ENCODE measurements at regions of chr15 and their contacts with region 1.

Region 1: DNA sequence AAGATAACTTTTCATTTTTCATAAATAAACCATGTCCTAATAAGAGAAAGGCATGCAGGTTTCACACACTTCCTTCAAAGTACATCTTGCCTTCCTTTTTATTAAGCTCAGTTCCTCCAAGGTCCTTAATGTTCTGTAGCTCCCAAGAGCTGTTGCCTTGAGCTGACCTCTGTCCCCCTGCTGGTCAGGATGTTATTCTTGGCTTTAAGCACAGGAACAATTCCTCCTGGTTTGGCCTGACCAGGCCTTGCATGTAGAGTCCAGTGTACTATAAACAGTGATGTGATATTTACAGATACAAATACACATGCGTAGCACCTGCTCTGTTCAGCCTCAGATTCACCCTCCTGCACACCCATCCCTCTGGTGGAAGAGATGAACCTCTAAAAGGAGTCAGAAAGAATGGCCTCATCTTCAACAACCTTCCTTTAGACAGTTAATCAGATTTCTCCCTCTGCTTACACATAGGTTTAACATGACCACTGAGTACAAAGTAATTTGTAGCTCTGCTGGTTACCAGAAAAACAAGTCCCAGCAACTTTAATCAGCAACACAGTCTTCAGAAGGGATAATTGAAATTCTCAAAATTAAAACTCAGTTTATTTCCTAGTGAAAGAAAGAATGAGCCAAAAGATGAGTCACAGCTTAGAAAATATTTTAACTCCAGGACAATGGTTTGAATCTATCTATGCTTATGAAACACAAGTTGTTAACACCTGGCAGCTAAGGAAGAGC is 46.5 kb downstream of the PTPN9 start:
- DNase-seq: no peak
- ATAC-seq: peak; percentile 31
- H3K4me3 ChIP-seq: no peak overlapping the region
- H3K4me3 Mint-ChIP-seq: no peak overlapping the region
- H3K27ac ChIP-seq: no peak overlapping the region
- H3K27ac Mint-ChIP-seq: peak overlapping the region in 5 of 9 donors; percentile 5 to 80 (median 20)
- H3K4me1 ChIP-seq: no peaks in the 10 kb centered on the region
- H3K4me1 Mint-ChIP-seq: peaks cover 8 to 34% (median 19%) of the 10 kb centered on the region in 7 donors
- H3K27me3 ChIP-seq: no peaks in the 10 kb centered on the region
- H3K27me3 Mint-ChIP-seq: no peaks in the 10 kb centered on the region

Region 2: GRCh38 chr15:75008629-75009326 is 523.8 kb before region 1 on chr15:
- CTCF ChIA-PET with region 1: no interaction called
- POLR2A ChIA-PET with region 1: no interaction called
- intact Hi-C with region 1: no loop called
- DNase-seq: no peak
- ATAC-seq: peak; percentile 42
- H3K4me3 ChIP-seq: no peak overlapping the region
- H3K4me3 Mint-ChIP-seq: no peak overlapping the region
- H3K27ac ChIP-seq: no peak overlapping the region
- H3K27ac Mint-ChIP-seq: no peak overlapping the region
- H3K4me1 ChIP-seq: no peaks in the 10 kb centered on the region
- H3K4me1 Mint-ChIP-seq: peaks cover 0 to 12% (median 8%) of the 10 kb centered on the region in 7 donors
- H3K27me3 ChIP-seq: no peaks in the 10 kb centered on the region
- H3K27me3 Mint-ChIP-seq: peaks cover 0 to 32% (median 0%) of the 10 kb centered on the region in 5 donors

Region 3: GRCh38 chr15:75389791-75390382 is 142.7 kb before region 1 on chr15:
- CTCF ChIA-PET with region 1: no interaction called
- POLR2A ChIA-PET with region 1: no interaction called
- intact Hi-C with region 1: no loop called
- DNase-seq: no peak
- ATAC-seq: no peak
- H3K4me3 ChIP-seq: no peak overlapping the region
- H3K4me3 Mint-ChIP-seq: no peak overlapping the region
- H3K27ac ChIP-seq: no peak overlapping the region
- H3K27ac Mint-ChIP-seq: peak overlapping the region in 1 of 9 donors; percentile 63
- H3K4me1 ChIP-seq: peaks cover 0 to 3% of the 10 kb centered on the region in 2 donors
- H3K4me1 Mint-ChIP-seq: peaks cover 4 to 16% (median 9%) of the 10 kb centered on the region in 7 donors
- H3K27me3 ChIP-seq: no peaks in the 10 kb centered on the region
- H3K27me3 Mint-ChIP-seq: no peaks in the 10 kb centered on the region

Region 4: DNA sequence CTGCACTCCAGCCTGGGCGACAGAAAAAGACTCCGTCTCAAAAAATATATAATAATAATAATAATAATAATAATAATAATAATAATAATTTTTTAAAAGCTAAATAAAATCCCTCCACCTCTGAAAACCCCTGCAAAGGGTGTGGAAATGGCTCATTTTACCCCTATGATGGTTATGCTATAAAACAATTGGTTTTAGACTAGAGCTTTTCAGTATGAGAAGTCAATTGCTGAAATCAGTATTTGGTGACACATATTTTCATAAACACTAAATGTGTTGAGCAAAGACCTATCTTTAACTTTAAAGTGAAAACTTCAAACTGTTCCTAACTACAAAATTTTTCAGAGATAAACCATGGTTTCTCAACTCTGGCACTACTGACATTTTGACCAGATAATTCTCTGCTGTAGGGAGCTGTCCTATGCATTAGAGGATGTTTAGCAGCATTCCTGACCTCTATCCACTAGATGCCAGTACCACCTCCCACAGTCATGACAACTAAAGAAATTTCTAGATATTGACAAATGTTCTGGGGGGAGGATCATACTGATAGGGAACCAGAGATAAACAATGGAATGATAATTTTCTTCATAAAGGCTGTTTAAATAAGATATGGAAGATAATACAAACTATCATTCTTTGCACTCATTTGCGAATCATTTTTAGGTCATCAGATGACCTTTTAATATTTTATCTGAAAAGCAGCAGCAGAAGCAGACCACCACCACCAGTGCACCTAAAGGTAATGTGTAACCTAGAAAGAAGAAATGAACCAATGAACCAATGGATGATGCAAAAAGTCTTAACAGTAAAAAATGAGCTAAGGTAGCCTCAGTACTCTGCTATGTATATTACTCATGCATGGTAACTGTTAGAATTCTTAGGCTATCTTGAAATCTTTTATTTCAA is 32.7 kb after region 1 on chr15:
- CTCF ChIA-PET with region 1: no interaction called
- POLR2A ChIA-PET with region 1: no interaction called
- intact Hi-C with region 1: loop called in 1 of 2 experiments (anchors 5 kb)
- DNase-seq: no peak
- ATAC-seq: no peak
- H3K4me3 ChIP-seq: no peak overlapping the region
- H3K4me3 Mint-ChIP-seq: no peak overlapping the region
- H3K27ac ChIP-seq: no peak overlapping the region
- H3K27ac Mint-ChIP-seq: peak overlapping the region in 1 of 9 donors; percentile 18
- H3K4me1 ChIP-seq: no peaks in the 10 kb centered on the region
- H3K4me1 Mint-ChIP-seq: peaks cover 0 to 16% (median 11%) of the 10 kb centered on the region in 7 donors
- H3K27me3 ChIP-seq: no peaks in the 10 kb centered on the region
- H3K27me3 Mint-ChIP-seq: no peaks in the 10 kb centered on the region

Region 5: DNA sequence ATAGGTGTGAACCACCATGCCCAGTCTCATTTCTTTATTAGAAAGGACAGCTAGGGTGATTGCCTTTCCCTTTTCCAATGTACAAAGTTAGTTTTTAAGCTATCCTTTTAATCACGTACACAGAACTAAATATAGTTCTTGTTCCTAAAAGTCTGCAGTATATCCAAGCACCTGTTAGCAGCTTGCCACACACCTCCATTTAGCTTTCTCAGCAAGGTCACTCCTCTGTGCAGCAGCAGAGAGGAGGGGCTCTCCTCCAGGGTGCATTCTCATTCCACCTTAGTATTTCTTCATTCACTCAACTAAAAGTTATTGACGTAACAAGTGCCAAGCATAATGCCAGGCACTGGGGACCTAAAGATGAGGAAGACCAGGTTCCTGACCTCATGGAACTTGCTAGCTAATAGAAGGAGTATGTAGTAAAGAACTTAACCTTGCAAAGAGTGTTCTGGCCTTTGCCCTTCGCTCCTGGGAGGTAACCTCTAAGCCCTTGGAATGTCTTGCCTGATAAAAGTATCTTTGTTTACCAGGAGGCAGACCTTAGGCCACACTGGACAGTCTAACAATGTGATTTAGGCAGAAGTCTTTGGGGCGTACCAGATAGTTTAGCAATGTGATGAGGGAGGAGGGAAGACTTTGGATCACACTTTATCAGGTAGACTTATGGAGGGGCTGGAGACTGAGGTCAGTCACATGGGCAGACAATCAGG is 59.2 kb after region 1 on chr15:
- CTCF ChIA-PET with region 1: no interaction called
- POLR2A ChIA-PET with region 1: no interaction called
- intact Hi-C with region 1: no loop called
- DNase-seq: no peak
- ATAC-seq: no peak
- H3K4me3 ChIP-seq: no peak overlapping the region
- H3K4me3 Mint-ChIP-seq: no peak overlapping the region
- H3K27ac ChIP-seq: no peak overlapping the region
- H3K27ac Mint-ChIP-seq: no peak overlapping the region
- H3K4me1 ChIP-seq: no peaks in the 10 kb centered on the region
- H3K4me1 Mint-ChIP-seq: peaks cover 7 to 31% (median 17%) of the 10 kb centered on the region in 7 donors
- H3K27me3 ChIP-seq: no peaks in the 10 kb centered on the region
- H3K27me3 Mint-ChIP-seq: no peaks in the 10 kb centered on the region

Region 6: DNA sequence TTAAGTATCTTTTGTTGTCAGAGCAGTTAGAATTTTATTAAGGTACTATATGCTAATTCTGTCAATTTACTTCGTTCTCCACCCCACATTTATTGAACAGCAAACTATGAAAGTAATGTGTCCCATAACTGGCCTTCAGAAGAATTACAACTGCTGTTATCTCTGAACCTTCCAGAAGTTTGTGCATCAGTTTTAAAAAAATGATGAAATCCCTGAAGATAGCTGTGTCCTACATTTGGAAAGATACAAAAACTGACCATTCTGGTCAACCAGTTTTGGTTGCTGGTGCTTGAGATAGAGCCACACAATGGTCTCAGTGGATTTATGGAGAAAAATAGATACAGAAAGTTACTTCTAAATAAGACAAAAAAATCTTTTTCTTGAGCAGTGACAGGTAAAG is 316.6 kb after region 1 on chr15:
- CTCF ChIA-PET with region 1: no interaction called
- POLR2A ChIA-PET with region 1: no interaction called
- intact Hi-C with region 1: no loop called
- DNase-seq: no peak
- ATAC-seq: no peak
- H3K4me3 ChIP-seq: no peak overlapping the region
- H3K4me3 Mint-ChIP-seq: peak overlapping the region in 3 of 10 donors; percentile 18 to 32 (median 23)
- H3K27ac ChIP-seq: no peak overlapping the region
- H3K27ac Mint-ChIP-seq: peak overlapping the region in 1 of 9 donors; percentile 3
- H3K4me1 ChIP-seq: peaks cover 31 to 35% of the 10 kb centered on the region in 2 donors
- H3K4me1 Mint-ChIP-seq: peaks cover 50 to 92% (median 87%) of the 10 kb centered on the region in 7 donors
- H3K27me3 ChIP-seq: no peaks in the 10 kb centered on the region
- H3K27me3 Mint-ChIP-seq: peaks cover 0 to 2% (median 0%) of the 10 kb centered on the region in 5 donors